IMR-90 (cell line): ENCODE measurements at regions of chr11 and their contacts with region 1.

Region 1: DNA sequence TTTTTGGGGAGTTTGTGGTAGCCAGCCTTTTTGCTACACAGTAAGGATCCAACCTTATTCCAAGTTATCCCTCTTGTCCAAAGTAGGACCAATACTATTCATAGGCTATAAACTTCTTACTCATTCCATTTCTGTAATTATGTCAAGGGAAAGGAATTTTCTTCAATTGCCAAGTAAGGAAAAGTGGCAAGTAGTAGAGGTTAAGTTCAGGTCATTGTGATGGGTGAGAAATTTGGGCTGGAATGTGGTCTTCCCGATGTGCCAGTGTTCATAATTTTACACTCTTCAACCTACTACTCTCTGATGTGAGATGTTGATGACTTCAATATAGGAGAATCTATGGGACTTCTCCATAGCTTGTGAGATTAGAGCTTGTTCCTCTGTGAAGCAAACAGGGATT is 648.8 kb downstream of the METTL15 start:
- DNase-seq: peak; percentile 89
- ATAC-seq: peak; percentile 65
- H3K4me3 ChIP-seq: no peak overlapping the region
- H3K27ac ChIP-seq: peak overlapping the region; percentile 96
- H3K4me1 ChIP-seq: peaks cover 10% of the 10 kb centered on the region; the same call in 1 of the 2 replicates
- H3K27me3 ChIP-seq: no peaks in the 10 kb centered on the region
- CTCF ChIP-seq: no peak
- POLR2A ChIP-seq: 0 out of 2 replicates have a peak, but pooled peaks have one; percentile 8
- RAD21 ChIP-seq: no peak

Region 2: DNA sequence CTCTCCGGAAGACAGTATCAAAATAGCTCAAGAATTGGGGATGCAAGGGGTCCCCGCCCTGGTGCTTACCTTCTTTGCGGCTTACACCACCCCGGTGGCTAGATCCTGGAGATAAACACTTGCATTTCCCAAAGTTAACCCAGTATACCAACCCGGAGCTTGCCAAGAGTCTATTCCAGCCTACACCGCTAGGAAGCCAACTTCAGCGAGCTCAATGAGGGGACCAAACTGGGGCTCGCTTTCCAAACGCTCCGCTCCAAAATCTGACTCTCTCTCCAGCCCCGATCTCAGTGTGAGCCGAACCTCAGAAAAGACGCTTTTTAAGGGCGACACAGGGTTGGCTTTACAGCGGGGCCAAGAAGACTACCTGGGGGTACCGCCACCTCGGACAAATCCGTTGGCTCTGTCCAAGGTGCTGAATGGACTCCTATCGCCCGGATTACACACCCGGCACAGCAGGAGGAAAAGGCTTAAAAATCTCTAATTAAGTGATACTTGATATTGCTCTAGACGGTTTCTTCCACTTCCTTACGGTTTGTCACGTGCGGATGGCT is 1036.6 kb before region 1 on chr11:
- CTCF ChIA-PET with region 1: no interaction called
- POLR2A ChIA-PET with region 1: no interaction called
- dilution Hi-C with region 1: no loop called
- in situ Hi-C with region 1: no loop called
- intact Hi-C with region 1: loop called (anchors 5 kb)
- DNase-seq: peak; percentile 68
- ATAC-seq: no peak
- H3K4me3 ChIP-seq: peak overlapping the region; percentile 0; the same call in 1 of the 2 replicates
- H3K27ac ChIP-seq: no peak overlapping the region
- H3K4me1 ChIP-seq: peaks cover 6% of the 10 kb centered on the region
- H3K27me3 ChIP-seq: no peaks in the 10 kb centered on the region
- CTCF ChIP-seq: 0 out of 2 replicates have a peak, but pooled peaks have one; percentile 18
- POLR2A ChIP-seq: no peak
- RAD21 ChIP-seq: no peak

Region 3: GRCh38 chr11:28107748-28108618 is 649.0 kb before region 1 on chr11 and contains the starts of genes KIF18A and METTL15:
- CTCF ChIA-PET with region 1: no interaction called
- POLR2A ChIA-PET with region 1: no interaction called
- dilution Hi-C with region 1: no loop called
- in situ Hi-C with region 1: no loop called
- intact Hi-C with region 1: loop called (anchors 2 kb)
- DNase-seq: peak; percentile 99
- ATAC-seq: peak; percentile 89
- H3K4me3 ChIP-seq: peak within 1 kb of the TSS; percentile 67
- H3K27ac ChIP-seq: peak within 1 kb of the TSS; percentile 69
- H3K4me1 ChIP-seq: no peaks in the 10 kb centered on the region
- H3K27me3 ChIP-seq: no peaks in the 10 kb centered on the region
- CTCF ChIP-seq: no peak
- POLR2A ChIP-seq: peak; percentile 96
- RAD21 ChIP-seq: peak; percentile 26
- total RNA-seq, gene KIF18A: 24.4 and 37.2 TPM in 2 replicates
- total RNA-seq, gene METTL15: 24.4 and 30.5 TPM in 2 replicates

Region 4: GRCh38 chr11:28529540-28530410 is 227.2 kb before region 1 on chr11:
- CTCF ChIA-PET with region 1: no interaction called
- POLR2A ChIA-PET with region 1: no interaction called
- dilution Hi-C with region 1: no loop called
- in situ Hi-C with region 1: no loop called
- intact Hi-C with region 1: loop called (anchors 1 kb)
- DNase-seq: peak; percentile 82
- ATAC-seq: peak; percentile 64
- H3K4me3 ChIP-seq: no peak overlapping the region
- H3K27ac ChIP-seq: peak overlapping the region; percentile 19; the same call in 1 of the 2 replicates
- H3K4me1 ChIP-seq: peaks cover 3% of the 10 kb centered on the region; the same call in 1 of the 2 replicates
- H3K27me3 ChIP-seq: no peaks in the 10 kb centered on the region
- CTCF ChIP-seq: peak; percentile 57
- POLR2A ChIP-seq: no peak
- RAD21 ChIP-seq: peak; percentile 59

Region 5: DNA sequence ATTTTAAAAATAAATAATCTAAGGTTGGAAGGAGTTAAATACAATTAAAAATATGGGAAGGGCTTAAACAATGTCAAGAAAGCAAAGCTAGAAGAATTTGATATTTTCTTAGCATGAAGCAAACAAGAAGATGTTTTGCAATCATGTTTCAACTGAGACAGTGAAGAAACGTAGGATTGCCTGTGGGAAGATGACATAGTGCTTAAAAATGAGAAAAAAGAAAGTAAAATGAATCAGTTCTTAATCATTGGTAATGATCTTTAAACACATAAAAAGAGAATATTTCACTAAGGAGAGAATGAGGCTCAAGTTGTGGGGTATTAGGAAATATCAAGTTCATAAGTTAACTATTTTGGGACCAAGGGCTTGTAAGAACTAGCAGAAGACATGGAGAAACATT is 206.2 kb after region 1 on chr11:
- CTCF ChIA-PET with region 1: no interaction called
- POLR2A ChIA-PET with region 1: no interaction called
- dilution Hi-C with region 1: no loop called
- in situ Hi-C with region 1: no loop called
- intact Hi-C with region 1: loop called (anchors 1 kb)
- DNase-seq: peak; percentile 83
- ATAC-seq: peak; percentile 36
- H3K4me3 ChIP-seq: no peak overlapping the region
- H3K27ac ChIP-seq: peak overlapping the region; percentile 87; the same call in 1 of the 2 replicates
- H3K4me1 ChIP-seq: peaks cover 13% of the 10 kb centered on the region
- H3K27me3 ChIP-seq: no peaks in the 10 kb centered on the region
- CTCF ChIP-seq: no peak
- POLR2A ChIP-seq: no peak
- RAD21 ChIP-seq: no peak

Region 6: GRCh38 chr11:29119707-29120695 is 363.0 kb after region 1 on chr11:
- CTCF ChIA-PET with region 1: no interaction called
- POLR2A ChIA-PET with region 1: interaction called, 7 read pairs
- dilution Hi-C with region 1: no loop called
- in situ Hi-C with region 1: no loop called
- intact Hi-C with region 1: loop called (anchors 1 kb)
- DNase-seq: peak; percentile 99
- ATAC-seq: peak; percentile 86
- H3K4me3 ChIP-seq: peak overlapping the region; percentile 23; the same call in 1 of the 2 replicates
- H3K27ac ChIP-seq: peak overlapping the region; percentile 92
- H3K4me1 ChIP-seq: peaks cover 9% of the 10 kb centered on the region
- H3K27me3 ChIP-seq: no peaks in the 10 kb centered on the region
- CTCF ChIP-seq: no peak
- POLR2A ChIP-seq: peak; percentile 26; the same call in 1 of the 2 replicates
- RAD21 ChIP-seq: peak; percentile 8; the same call in 1 of the 2 replicates

Region 7: DNA sequence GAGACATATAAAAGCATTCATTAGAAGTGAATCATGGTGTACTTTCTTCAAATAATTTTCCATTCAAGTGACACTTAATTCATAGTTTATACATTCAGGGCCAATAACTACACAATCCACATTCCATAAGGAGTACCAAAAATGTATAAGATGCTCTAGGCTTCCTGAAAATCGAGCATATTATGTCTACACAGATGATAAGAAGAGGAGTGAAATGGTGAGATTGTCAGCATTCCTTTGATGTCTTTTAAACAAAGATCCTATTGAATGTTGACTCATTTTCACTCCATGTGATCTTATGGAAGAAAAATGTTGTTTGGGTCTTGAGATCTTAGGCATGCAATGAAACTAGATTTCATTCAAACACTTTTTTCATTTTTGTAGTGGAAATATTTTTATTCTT is 416.7 kb after region 1 on chr11:
- CTCF ChIA-PET with region 1: no interaction called
- POLR2A ChIA-PET with region 1: no interaction called
- dilution Hi-C with region 1: no loop called
- in situ Hi-C with region 1: no loop called
- intact Hi-C with region 1: loop called (anchors 1 kb)
- DNase-seq: peak; percentile 99
- ATAC-seq: peak; percentile 86
- H3K4me3 ChIP-seq: no peak overlapping the region
- H3K27ac ChIP-seq: peak overlapping the region; percentile 99; the same call in 1 of the 2 replicates
- H3K4me1 ChIP-seq: peaks cover 6% of the 10 kb centered on the region
- H3K27me3 ChIP-seq: no peaks in the 10 kb centered on the region
- CTCF ChIP-seq: no peak
- POLR2A ChIP-seq: no peak
- RAD21 ChIP-seq: peak; percentile 19; the same call in 1 of the 2 replicates